Activated CD4-positive, alpha-beta memory T cell treated with anti-CD3 and anti-CD28 coated beads, Interleukin-2, amount 10 ng/mL, durations not matched to agents 7 days and 5 days (primary cell): ENCODE measurements at regions of chr1 and their contacts with region 1.

Region 1: GRCh38 chr1:42777852-42778251 is 6.9 kb upstream of the TMEM269 start:
- DNase-seq: peak; percentile 36
- H3K4me3 Mint-ChIP-seq: no peak overlapping the region
- H3K27ac Mint-ChIP-seq: no peak overlapping the region
- H3K4me1 Mint-ChIP-seq: peaks cover 37% of the 10 kb centered on the region
- H3K27me3 Mint-ChIP-seq: no peaks in the 10 kb centered on the region

Region 2: DNA sequence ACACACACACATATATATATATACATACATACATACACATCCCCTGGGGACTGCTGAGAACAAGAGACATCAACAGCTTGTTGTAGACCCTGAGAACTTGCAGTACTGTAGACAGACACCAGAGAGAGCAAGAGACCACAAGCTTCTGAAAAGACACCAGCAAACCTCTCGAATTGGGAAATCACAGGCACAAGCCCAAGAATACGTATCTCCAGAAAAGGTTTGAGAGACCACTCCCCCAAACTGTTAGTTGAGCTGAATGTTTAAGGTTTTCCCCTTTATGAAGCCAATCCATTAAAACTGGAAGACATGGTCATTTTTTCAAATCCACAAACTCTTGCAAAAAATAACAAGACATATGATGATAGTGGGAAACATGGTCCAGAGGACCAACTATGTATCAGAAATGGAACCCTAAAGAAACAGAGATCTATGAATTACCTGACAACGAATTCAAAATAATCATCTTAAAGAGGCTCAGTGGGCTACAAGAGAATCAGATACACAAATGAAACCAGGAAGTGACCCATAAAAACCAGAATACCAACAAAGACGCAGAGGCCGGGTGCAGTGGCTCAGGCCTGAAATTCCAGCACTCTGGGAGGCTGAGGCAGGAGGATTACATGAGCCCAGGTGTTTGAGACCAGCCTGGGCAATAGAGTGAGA is 135.7 kb after region 1 on chr1:
- CTCF ChIA-PET with region 1: interaction called, 25 read pairs
- POLR2A ChIA-PET with region 1: interaction called, 3 read pairs
- DNase-seq: peak; percentile 62
- H3K4me3 Mint-ChIP-seq: no peak overlapping the region
- H3K27ac Mint-ChIP-seq: no peak overlapping the region
- H3K4me1 Mint-ChIP-seq: peaks cover 16% of the 10 kb centered on the region
- H3K27me3 Mint-ChIP-seq: peaks cover 9% of the 10 kb centered on the region